Activated naive CD4-positive, alpha-beta T cell treated with anti-CD3 and anti-CD28 coated beads, Interleukin-2, amount 10 ng/mL, durations not matched to agents 7 days and 5 days (primary cell): ENCODE measurements at regions of chr5 and their contacts with region 1.

Region 1: GRCh38 chr5:141691867-141692532 is 10.0 kb upstream of the ARAP3 start:
- DNase-seq: peak; percentile 90
- H3K4me3 Mint-ChIP-seq: peak overlapping the region; percentile 31
- H3K27ac Mint-ChIP-seq: no peak overlapping the region
- H3K4me1 Mint-ChIP-seq: peaks cover 27% of the 10 kb centered on the region
- H3K27me3 Mint-ChIP-seq: peaks cover 58% of the 10 kb centered on the region

Region 2: DNA sequence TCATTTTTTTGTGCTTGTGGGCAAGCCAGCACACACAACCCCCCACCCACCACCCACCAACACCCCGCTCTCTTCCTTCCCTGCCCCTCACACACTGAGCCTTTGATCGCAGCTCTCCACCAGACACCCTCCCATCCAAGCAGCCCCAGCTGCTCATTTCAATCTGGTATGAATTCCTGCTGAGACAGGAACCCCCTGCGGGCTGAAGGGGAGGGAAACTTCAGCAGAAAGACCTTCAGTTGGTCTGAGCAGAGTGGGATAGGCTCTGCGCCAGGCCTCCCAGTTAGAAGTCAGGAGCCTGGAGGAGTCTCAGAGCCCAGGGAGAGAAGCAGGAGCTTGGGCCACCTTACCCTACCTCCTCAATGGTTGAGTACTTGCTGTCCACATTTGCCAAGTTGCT is 196.0 kb before region 1 on chr5:
- CTCF ChIA-PET with region 1: no interaction called
- DNase-seq: no peak
- H3K4me3 Mint-ChIP-seq: no peak overlapping the region
- H3K27ac Mint-ChIP-seq: no peak overlapping the region
- H3K4me1 Mint-ChIP-seq: peaks cover 4% of the 10 kb centered on the region
- H3K27me3 Mint-ChIP-seq: peaks cover 74% of the 10 kb centered on the region

Region 3: GRCh38 chr5:141664732-141665461 is 27.1 kb before region 1 on chr5:
- CTCF ChIA-PET with region 1: interaction called, 28 read pairs
- DNase-seq: peak; percentile 84
- H3K4me3 Mint-ChIP-seq: no peak overlapping the region
- H3K27ac Mint-ChIP-seq: no peak overlapping the region
- H3K4me1 Mint-ChIP-seq: peaks cover 5% of the 10 kb centered on the region
- H3K27me3 Mint-ChIP-seq: peaks cover 19% of the 10 kb centered on the region

Region 4: GRCh38 chr5:141811287-141812155 is 119.5 kb after region 1 on chr5:
- CTCF ChIA-PET with region 1: interaction called, 27 read pairs
- DNase-seq: peak; percentile 45
- H3K4me3 Mint-ChIP-seq: no peak overlapping the region
- H3K27ac Mint-ChIP-seq: no peak overlapping the region
- H3K4me1 Mint-ChIP-seq: no peaks in the 10 kb centered on the region
- H3K27me3 Mint-ChIP-seq: peaks cover 89% of the 10 kb centered on the region

Region 5: GRCh38 chr5:141923448-141924352 is 231.7 kb after region 1 on chr5 and contains the start of gene DELE1:
- CTCF ChIA-PET with region 1: interaction called, 11 read pairs
- DNase-seq: peak; percentile 96
- H3K4me3 Mint-ChIP-seq: peak within 1 kb of the TSS; percentile 89
- H3K27ac Mint-ChIP-seq: peak within 1 kb of the TSS; percentile 90
- H3K4me1 Mint-ChIP-seq: peaks cover 44% of the 10 kb centered on the region
- H3K27me3 Mint-ChIP-seq: no peaks in the 10 kb centered on the region

Region 6: DNA sequence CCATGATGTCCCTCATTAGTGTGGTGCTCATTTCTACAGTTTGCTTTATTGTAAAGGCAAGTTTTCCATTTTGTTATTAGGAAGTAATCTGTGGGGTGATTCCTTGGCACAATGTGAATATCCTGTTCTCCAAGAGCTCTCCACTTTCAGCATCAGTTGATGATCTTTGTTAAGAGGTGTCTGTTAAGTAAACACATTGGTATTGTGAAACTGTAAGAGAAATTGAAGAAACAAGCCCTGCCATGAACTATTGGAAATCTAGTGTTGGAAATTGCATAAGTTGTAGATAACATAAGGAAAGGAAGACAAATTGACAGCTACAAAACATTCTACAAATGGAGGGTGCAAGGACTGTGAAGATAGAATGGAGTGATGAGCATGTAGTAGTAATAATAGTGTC is 294.1 kb after region 1 on chr5:
- CTCF ChIA-PET with region 1: no interaction called
- DNase-seq: no peak
- H3K4me3 Mint-ChIP-seq: no peak overlapping the region
- H3K27ac Mint-ChIP-seq: no peak overlapping the region
- H3K4me1 Mint-ChIP-seq: no peaks in the 10 kb centered on the region
- H3K27me3 Mint-ChIP-seq: no peaks in the 10 kb centered on the region

Region 7: GRCh38 chr5:142012792-142013388 is 320.9 kb after region 1 on chr5 and contains the start of gene GNPDA1:
- CTCF ChIA-PET with region 1: interaction called, 14 read pairs
- DNase-seq: peak; percentile 77
- H3K4me3 Mint-ChIP-seq: peak within 1 kb of the TSS; percentile 82
- H3K27ac Mint-ChIP-seq: peak within 1 kb of the TSS; percentile 96
- H3K4me1 Mint-ChIP-seq: peaks cover 91% of the 10 kb centered on the region
- H3K27me3 Mint-ChIP-seq: no peaks in the 10 kb centered on the region